Dendritic cell treated with granulocyte-macrophage colony-stimulating factor and Interleukin-4, amounts not matched to agents 40 ng/mL and 50 ng/mL, for 4 days (primary cell): ENCODE measurements at regions of chr12 and their contacts with region 1.

Region 1: GRCh38 chr12:14554281-14555007 is 13.2 kb downstream of the PLBD1 start:
- H3K4me3 Mint-ChIP-seq: no peak overlapping the region
- H3K27ac Mint-ChIP-seq: no peak overlapping the region
- H3K4me1 Mint-ChIP-seq: peaks cover 20% of the 10 kb centered on the region
- H3K27me3 Mint-ChIP-seq: no peaks in the 10 kb centered on the region

Region 2: GRCh38 chr12:14373217-14373616 is 181.2 kb before region 1 on chr12:
- intact Hi-C with region 1: loop called (anchors 10 kb)
- H3K4me3 Mint-ChIP-seq: no peak overlapping the region
- H3K27ac Mint-ChIP-seq: peak overlapping the region; percentile 30
- H3K4me1 Mint-ChIP-seq: peaks cover 6% of the 10 kb centered on the region
- H3K27me3 Mint-ChIP-seq: no peaks in the 10 kb centered on the region

Region 3: DNA sequence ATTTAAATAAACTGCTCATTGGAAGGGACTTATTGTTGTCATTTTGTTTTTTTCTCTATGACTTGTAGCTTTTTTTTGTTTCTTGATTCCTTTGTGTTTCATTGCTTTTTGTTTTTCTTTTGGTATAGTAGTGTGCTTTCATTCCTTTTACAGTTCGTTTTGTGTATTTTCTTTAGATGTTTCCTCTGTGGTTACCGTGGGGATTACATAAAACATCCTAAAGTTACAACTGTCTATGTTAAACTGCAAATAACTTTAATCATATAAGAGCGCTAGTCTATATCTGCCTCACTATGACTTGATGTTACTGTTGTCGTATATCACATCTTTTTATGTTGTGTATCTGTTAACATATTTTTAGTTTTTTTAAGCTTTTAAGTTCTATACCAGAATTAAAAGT is 102.1 kb before region 1 on chr12:
- intact Hi-C with region 1: no loop called
- H3K4me3 Mint-ChIP-seq: no peak overlapping the region
- H3K27ac Mint-ChIP-seq: no peak overlapping the region
- H3K4me1 Mint-ChIP-seq: peaks cover 27% of the 10 kb centered on the region
- H3K27me3 Mint-ChIP-seq: no peaks in the 10 kb centered on the region

Region 4: GRCh38 chr12:14473707-14474287 is 80.6 kb before region 1 on chr12:
- intact Hi-C with region 1: no loop called
- H3K4me3 Mint-ChIP-seq: no peak overlapping the region
- H3K27ac Mint-ChIP-seq: no peak overlapping the region
- H3K4me1 Mint-ChIP-seq: no peaks in the 10 kb centered on the region
- H3K27me3 Mint-ChIP-seq: no peaks in the 10 kb centered on the region

Region 5: DNA sequence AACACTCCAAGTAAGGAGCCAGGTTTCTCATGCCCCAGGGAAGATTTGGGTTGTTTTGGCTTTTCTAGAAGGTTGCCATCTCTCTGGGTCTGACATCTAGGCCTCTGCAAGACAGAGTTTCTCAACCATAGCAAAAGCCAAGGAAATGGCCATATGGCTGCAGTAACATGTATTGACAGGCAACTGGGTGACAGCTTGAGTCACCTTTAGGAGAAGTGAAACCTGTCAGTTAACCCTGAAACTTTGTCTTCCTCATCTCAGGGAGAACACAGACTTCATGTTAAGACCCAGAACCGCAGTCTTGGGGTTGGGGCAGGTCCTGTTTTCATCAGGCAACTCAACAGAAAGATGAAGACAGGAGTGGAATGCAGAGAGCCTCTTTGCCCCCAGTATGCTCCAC is 59.3 kb after region 1 on chr12:
- intact Hi-C with region 1: loop called (anchors 2 kb)
- H3K4me3 Mint-ChIP-seq: no peak overlapping the region
- H3K27ac Mint-ChIP-seq: peak overlapping the region; percentile 85
- H3K4me1 Mint-ChIP-seq: peaks cover 35% of the 10 kb centered on the region
- H3K27me3 Mint-ChIP-seq: no peaks in the 10 kb centered on the region

Region 6: DNA sequence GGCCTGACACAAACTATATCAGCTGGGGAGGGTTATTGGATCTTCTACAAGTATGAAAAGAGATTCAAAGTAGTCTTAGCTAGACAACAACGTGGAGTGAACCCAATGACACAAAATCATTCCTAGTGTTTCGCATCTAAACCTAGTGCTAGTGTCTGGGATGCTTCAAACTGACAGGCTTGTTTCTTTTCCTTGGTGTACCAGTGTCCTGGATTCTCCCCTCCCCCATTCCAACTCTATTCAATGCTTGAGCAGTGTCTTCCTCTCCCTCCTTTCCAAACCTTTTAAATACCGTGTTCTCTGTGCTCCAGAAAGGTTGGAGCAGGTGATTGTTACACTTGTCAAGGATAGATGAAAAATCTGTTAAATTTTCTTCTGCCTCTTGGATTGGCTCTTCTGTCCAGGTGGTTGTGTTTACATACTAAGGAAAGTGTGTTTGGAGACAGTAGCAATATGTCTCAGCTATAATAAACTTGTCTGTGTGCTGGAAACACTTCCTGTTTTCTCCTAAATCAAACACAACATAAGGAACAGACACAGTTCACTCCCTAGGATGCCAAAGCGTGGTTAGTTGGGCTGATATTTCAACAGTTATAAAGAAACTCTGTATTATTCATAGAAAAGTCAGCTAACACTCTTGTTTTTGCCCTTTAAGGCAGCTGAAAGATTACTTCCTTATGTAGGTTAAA is 156.3 kb after region 1 on chr12:
- intact Hi-C with region 1: no loop called
- H3K4me3 Mint-ChIP-seq: no peak overlapping the region
- H3K27ac Mint-ChIP-seq: no peak overlapping the region
- H3K4me1 Mint-ChIP-seq: peaks cover 22% of the 10 kb centered on the region
- H3K27me3 Mint-ChIP-seq: peaks cover 42% of the 10 kb centered on the region